CD8-positive, alpha-beta T cell (primary cell): ENCODE measurements at regions of chr13 and their contacts with region 1.

Region 1: GRCh38 chr13:27607125-27607524 is 13.2 kb downstream of the LNX2 start:
- DNase-seq: no peak
- ATAC-seq: no peak
- H3K4me3 ChIP-seq: no peak overlapping the region
- H3K4me3 Mint-ChIP-seq: no peak overlapping the region
- H3K27ac ChIP-seq: no peak overlapping the region
- H3K27ac Mint-ChIP-seq: no peak overlapping the region
- H3K4me1 ChIP-seq: no peaks in the 10 kb centered on the region
- H3K4me1 Mint-ChIP-seq: peaks cover 38% of the 10 kb centered on the region
- H3K27me3 ChIP-seq: no peaks in the 10 kb centered on the region
- H3K27me3 Mint-ChIP-seq: no peaks in the 10 kb centered on the region
- CTCF ChIP-seq: no peak

Region 2: DNA sequence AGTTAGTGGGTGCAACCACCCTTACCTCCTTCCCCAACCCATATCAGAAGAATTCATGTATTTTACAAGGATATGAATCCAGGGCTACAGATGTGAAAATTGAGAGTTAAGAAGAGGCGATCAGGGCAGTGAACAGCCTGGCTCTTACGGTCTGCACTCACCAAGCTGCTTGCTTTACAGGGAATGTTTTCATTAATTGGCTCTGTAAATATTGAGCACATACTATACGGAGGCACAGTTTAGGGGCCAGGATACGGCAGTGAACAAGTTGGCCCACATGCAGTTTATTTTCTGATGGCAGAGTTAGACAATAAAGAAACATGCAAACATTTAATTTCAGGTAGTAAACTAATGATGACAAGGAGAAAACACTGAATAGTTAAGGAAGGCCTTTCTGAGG is 21.0 kb after region 1 on chr13:
- CTCF ChIA-PET with region 1: no interaction called
- POLR2A ChIA-PET with region 1: no interaction called
- intact Hi-C with region 1: loop called in 1 of 2 experiments (anchors 2 kb)
- DNase-seq: no peak
- ATAC-seq: no peak
- H3K4me3 ChIP-seq: no peak overlapping the region
- H3K4me3 Mint-ChIP-seq: no peak overlapping the region
- H3K27ac ChIP-seq: no peak overlapping the region
- H3K27ac Mint-ChIP-seq: peak overlapping the region; percentile 1
- H3K4me1 ChIP-seq: peaks cover 10% of the 10 kb centered on the region
- H3K4me1 Mint-ChIP-seq: peaks cover 75% of the 10 kb centered on the region
- H3K27me3 ChIP-seq: no peaks in the 10 kb centered on the region
- H3K27me3 Mint-ChIP-seq: no peaks in the 10 kb centered on the region
- CTCF ChIP-seq: no peak

Region 3: DNA sequence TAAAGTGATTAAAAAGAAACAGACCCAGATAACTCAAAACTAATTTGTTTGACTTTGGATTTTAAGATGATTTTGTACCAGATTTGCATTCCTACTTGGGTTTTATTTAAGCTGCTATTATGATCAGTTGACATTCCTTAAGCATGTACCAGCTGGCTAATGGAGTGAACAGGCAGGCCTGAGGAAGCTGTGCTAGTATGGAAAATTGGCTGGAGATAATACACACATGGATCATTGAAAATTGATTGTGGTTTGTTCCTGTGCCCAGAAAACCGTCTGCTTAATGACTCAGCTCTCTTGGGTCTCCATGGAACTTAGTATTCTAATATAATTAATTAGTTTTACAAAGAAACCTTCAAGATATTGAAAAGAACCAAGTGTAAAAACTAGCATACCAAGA is 37.2 kb after region 1 on chr13:
- CTCF ChIA-PET with region 1: no interaction called
- POLR2A ChIA-PET with region 1: interaction called, 5 read pairs
- intact Hi-C with region 1: loop called in 1 of 2 experiments (anchors 5 kb)
- DNase-seq: no peak
- ATAC-seq: no peak
- H3K4me3 ChIP-seq: no peak overlapping the region
- H3K4me3 Mint-ChIP-seq: no peak overlapping the region
- H3K27ac ChIP-seq: no peak overlapping the region
- H3K27ac Mint-ChIP-seq: no peak overlapping the region
- H3K4me1 ChIP-seq: no peaks in the 10 kb centered on the region
- H3K4me1 Mint-ChIP-seq: peaks cover 32% of the 10 kb centered on the region
- H3K27me3 ChIP-seq: no peaks in the 10 kb centered on the region
- H3K27me3 Mint-ChIP-seq: no peaks in the 10 kb centered on the region
- CTCF ChIP-seq: no peak